ENCODE measurements at regions of chr4 and their contacts with region 1.

Region 1: DNA sequence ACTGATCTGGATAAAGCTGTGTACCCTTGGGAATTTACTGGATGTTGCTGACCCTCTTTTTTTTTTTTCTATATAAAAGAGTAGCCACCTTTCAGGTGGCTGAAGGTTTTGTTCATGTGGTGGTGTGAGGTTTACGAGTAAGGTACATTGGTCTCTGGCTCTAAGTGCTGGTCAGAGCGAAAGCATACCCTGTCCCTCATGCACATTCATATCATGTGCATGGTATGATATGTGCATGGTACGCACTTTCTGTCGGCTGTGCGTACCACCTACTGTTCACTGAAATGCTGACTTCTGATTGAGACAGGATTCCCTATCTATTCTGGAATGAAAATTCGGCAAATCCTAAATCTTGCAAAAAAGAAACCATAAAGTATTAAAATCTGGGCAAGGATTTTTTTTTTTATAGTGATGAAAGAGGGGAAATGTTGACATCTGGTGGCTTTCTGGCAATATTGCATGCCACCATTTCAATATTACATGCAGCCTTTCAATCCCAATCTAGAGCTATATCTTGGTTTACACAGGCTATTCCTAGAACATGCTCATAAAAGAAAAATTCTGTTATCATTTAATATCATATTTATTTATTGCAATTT is 32.8 kb downstream of the FAM149A start:
- DNase-seq: no peak
- H3K4me3 ChIP-seq: no peak overlapping the region
- H3K27ac ChIP-seq: no peak overlapping the region
- H3K4me1 ChIP-seq: peaks cover 4 to 7% (median 5%) of the 10 kb centered on the region in 4 experiments
- H3K27me3 ChIP-seq: no peaks in the 10 kb centered on the region
- CTCF ChIP-seq: peak in 2 of 3 experiments; percentile 40 to 51; a peak in 2 of 4 replicates
- EP300 ChIP-seq: no peak
- POLR2A ChIP-seq: no peak
- RAD21 ChIP-seq: peak; percentile 72 to 73

Region 2: DNA sequence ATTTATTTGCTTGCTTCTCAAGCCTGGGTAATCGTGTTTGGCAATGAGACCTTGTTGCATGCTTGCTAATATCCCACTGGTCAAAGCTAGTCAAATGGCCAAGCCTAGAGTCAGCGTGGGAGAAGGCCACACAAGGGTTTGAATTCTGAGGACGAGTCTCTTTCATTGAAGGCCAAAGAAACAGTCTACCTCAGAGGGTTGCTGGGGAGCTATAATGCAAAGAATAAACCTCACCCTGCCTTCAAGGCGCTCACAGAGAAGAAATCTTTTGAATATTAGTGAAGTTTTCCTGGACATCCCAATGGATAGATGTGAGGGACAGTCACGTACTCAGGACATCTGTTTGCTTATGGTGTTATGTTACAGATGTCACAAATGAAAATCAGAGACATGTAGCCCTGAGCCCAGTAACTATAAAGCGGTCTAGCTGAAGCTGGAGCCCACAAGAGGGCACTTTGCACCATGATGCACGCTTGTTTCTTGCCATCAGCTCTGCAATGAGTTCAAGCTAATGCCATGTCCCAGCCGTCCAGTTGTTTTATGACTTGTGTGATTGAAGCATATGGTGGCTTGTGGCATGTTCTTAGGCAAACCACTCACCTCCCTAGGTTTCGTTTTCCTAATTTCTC is 69.4 kb before region 1 on chr4:
- CTCF ChIA-PET with region 1: interaction called, 53 read pairs
- POLR2A ChIA-PET with region 1: no interaction called
- DNase-seq: peak; percentile 10 to 45
- H3K4me3 ChIP-seq: no peak overlapping the region
- H3K27ac ChIP-seq: no peak overlapping the region
- H3K4me1 ChIP-seq: peaks cover 0 to 7% (median 3%) of the 10 kb centered on the region in 4 experiments; a peak in 3 of 7 replicates
- H3K27me3 ChIP-seq: no peaks in the 10 kb centered on the region
- CTCF ChIP-seq: peak; percentile 40 to 74 (median 59)
- EP300 ChIP-seq: no peak
- POLR2A ChIP-seq: no peak
- RAD21 ChIP-seq: peak; percentile 77 to 86

Region 3: GRCh38 chr4:186078980-186079695 is 58.2 kb before region 1 on chr4:
- CTCF ChIA-PET with region 1: interaction called, 53 read pairs
- POLR2A ChIA-PET with region 1: no interaction called
- DNase-seq: no peak
- H3K4me3 ChIP-seq: 0 out of 8 replicates have a peak overlapping the region, but pooled peaks of 1 of the 4 experiments have one; percentile 7
- H3K27ac ChIP-seq: no peak overlapping the region
- H3K4me1 ChIP-seq: peaks cover 9 to 17% (median 13%) of the 10 kb centered on the region in 4 experiments
- H3K27me3 ChIP-seq: no peaks in the 10 kb centered on the region
- CTCF ChIP-seq: no peak
- EP300 ChIP-seq: no peak
- POLR2A ChIP-seq: no peak
- RAD21 ChIP-seq: peak; percentile 20 to 21; a peak in 1 of 4 replicates

Region 4: DNA sequence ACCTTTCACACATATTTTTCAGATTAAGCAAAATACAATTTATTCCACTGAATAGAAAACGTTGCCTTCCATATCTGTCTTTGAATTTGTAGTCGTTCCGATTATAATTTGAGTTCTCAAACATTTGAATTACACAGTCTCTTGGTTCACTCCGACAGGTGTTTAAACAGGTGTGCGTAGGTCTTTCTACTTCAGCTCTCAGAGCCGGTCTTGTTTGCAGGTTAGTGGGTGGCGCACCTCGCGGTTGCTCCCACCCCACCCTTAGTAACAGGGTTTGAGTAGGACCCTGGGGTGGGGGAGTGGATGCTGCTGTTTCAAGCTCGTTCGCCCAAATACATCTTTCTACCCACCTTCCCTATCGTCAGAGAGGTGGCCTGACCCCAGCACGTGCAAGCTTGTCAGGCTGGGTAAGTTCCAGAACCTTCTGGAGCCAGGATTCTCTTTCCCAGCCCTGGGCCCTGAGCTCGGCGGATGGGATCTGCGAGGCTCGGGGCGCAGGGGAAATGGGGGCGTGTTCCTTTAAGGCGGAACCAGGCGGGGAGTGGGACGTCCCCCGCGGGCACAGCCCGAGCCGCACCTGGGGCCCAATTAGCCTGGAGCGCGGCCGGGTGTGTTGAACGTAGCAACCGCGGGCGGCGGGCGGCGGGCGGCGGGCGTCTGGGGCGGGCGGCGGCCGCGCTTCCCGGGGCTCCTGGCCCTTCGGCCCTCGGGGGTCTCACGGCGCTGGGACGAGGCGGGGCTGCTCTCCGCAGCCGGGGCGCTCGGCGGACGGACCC is 33.0 kb before region 1 on chr4 and contains the start of gene FAM149A:
- CTCF ChIA-PET with region 1: interaction called, 16 read pairs
- POLR2A ChIA-PET with region 1: no interaction called
- DNase-seq: peak in 1 of 2 experiments; percentile 70
- H3K4me3 ChIP-seq: peak within 1 kb of the TSS; percentile 39 to 67 (median 44)
- H3K27ac ChIP-seq: no peak within 1 kb of the TSS
- H3K4me1 ChIP-seq: peaks cover 0 to 10% (median 4%) of the 10 kb centered on the region in 4 experiments; a peak in 4 of 7 replicates
- H3K27me3 ChIP-seq: peaks cover 7 to 35% (median 27%) of the 10 kb centered on the region in 4 experiments; a peak in 6 of 7 replicates
- CTCF ChIP-seq: no peak
- EP300 ChIP-seq: no peak
- POLR2A ChIP-seq: no peak
- RAD21 ChIP-seq: no peak
- total RNA-seq, gene FAM149A: 7.5 and 8.5 TPM in 2 replicates

Region 5: GRCh38 chr4:186161138-186161537 is 23.8 kb after region 1 on chr4:
- CTCF ChIA-PET with region 1: interaction called, 14 read pairs
- POLR2A ChIA-PET with region 1: no interaction called
- DNase-seq: no peak
- H3K4me3 ChIP-seq: no peak overlapping the region
- H3K27ac ChIP-seq: no peak overlapping the region
- H3K4me1 ChIP-seq: peaks cover 0 to 2% (median 0%) of the 10 kb centered on the region in 4 experiments; a peak in 2 of 7 replicates
- H3K27me3 ChIP-seq: no peaks in the 10 kb centered on the region
- CTCF ChIP-seq: no peak
- EP300 ChIP-seq: no peak
- POLR2A ChIP-seq: no peak
- RAD21 ChIP-seq: no peak

Measured in H1 (cell line).